B cell (primary cell): ENCODE measurements at regions of chr15 and their contacts with region 1.

Region 1: GRCh38 chr15:64809649-64810496 is 15.6 kb downstream of the PIF1 start:
- DNase-seq: peak; percentile 78
- ATAC-seq: peak; percentile 73
- H3K4me3 ChIP-seq: no peak overlapping the region
- H3K4me3 Mint-ChIP-seq: no peak overlapping the region
- H3K27ac ChIP-seq: no peak overlapping the region
- H3K27ac Mint-ChIP-seq: peak overlapping the region; percentile 56
- H3K4me1 ChIP-seq: peaks cover 0 to 11% of the 10 kb centered on the region in 2 donors
- H3K4me1 Mint-ChIP-seq: peaks cover 13% of the 10 kb centered on the region
- H3K27me3 ChIP-seq: no peaks in the 10 kb centered on the region
- H3K27me3 Mint-ChIP-seq: no peaks in the 10 kb centered on the region
- CTCF ChIP-seq: peak; percentile 93

Region 2: DNA sequence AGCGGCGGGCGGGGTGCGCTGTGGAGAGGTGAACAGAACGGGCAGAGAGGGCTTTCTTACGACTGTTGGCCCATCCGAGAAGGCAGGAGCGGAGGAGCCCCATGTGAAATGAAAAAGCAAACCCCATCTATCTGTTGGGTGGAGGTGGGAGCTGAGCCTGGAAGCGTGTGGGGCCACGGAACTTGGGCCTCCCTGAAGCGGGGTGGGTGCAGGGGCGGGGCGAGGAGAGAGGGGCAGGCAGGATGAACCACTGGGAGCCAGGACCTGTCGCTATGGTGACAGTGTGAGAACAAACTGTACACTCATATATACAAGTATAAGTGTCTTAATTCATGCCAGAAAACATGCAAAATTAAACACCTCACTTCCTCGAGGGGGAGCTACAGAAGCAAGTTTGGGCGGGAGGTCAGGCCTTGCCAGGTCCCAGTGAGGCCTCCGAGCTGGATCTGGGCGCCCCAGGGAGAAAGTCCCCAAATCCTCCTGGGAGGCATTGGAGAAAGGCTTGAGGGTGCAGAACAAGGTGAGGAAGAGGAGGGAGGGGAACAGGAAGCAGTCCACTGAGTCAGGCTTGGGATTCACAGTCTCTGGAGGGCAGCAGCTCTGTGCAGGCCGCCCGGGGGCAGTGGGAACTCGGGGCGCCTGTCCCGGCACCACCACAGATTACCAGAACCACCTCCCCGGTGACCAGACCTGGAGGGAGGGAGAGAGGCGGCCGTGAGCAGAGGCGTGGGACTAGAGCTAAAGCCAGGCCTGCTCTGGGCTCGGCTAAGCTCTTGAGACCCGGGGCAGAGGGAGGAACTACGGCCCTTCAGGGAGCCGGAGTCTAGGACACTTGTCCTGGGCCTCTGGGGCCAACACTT is 69.3 kb before region 1 on chr15:
- CTCF ChIA-PET with region 1: interaction called, 30 read pairs
- POLR2A ChIA-PET with region 1: no interaction called
- intact Hi-C with region 1: no loop called
- DNase-seq: no peak
- ATAC-seq: no peak
- H3K4me3 ChIP-seq: no peak overlapping the region
- H3K4me3 Mint-ChIP-seq: no peak overlapping the region
- H3K27ac ChIP-seq: no peak overlapping the region
- H3K27ac Mint-ChIP-seq: no peak overlapping the region
- H3K4me1 ChIP-seq: no peaks in the 10 kb centered on the region
- H3K4me1 Mint-ChIP-seq: no peaks in the 10 kb centered on the region
- H3K27me3 ChIP-seq: no peaks in the 10 kb centered on the region
- H3K27me3 Mint-ChIP-seq: no peaks in the 10 kb centered on the region
- CTCF ChIP-seq: no peak

Region 3: GRCh38 chr15:64783796-64784195 is 26.1 kb before region 1 on chr15:
- CTCF ChIA-PET with region 1: interaction called, 17 read pairs
- POLR2A ChIA-PET with region 1: no interaction called
- intact Hi-C with region 1: no loop called
- DNase-seq: no peak
- ATAC-seq: no peak
- H3K4me3 ChIP-seq: no peak overlapping the region
- H3K4me3 Mint-ChIP-seq: no peak overlapping the region
- H3K27ac ChIP-seq: no peak overlapping the region
- H3K27ac Mint-ChIP-seq: no peak overlapping the region
- H3K4me1 ChIP-seq: peaks cover 5 to 16% of the 10 kb centered on the region in 2 donors
- H3K4me1 Mint-ChIP-seq: peaks cover 10% of the 10 kb centered on the region
- H3K27me3 ChIP-seq: peaks cover 0 to 5% (median 0%) of the 10 kb centered on the region in 4 experiments
- H3K27me3 Mint-ChIP-seq: no peaks in the 10 kb centered on the region
- CTCF ChIP-seq: no peak

Region 4: GRCh38 chr15:64836023-64836536 is 26.2 kb after region 1 on chr15:
- CTCF ChIA-PET with region 1: interaction called, 34 read pairs
- POLR2A ChIA-PET with region 1: no interaction called
- intact Hi-C with region 1: no loop called
- DNase-seq: no peak
- ATAC-seq: no peak
- H3K4me3 ChIP-seq: no peak overlapping the region
- H3K4me3 Mint-ChIP-seq: peak overlapping the region; percentile 71
- H3K27ac ChIP-seq: no peak overlapping the region
- H3K27ac Mint-ChIP-seq: peak overlapping the region; percentile 69
- H3K4me1 ChIP-seq: peaks cover 10 to 18% of the 10 kb centered on the region in 2 donors
- H3K4me1 Mint-ChIP-seq: peaks cover 27% of the 10 kb centered on the region
- H3K27me3 ChIP-seq: no peaks in the 10 kb centered on the region
- H3K27me3 Mint-ChIP-seq: no peaks in the 10 kb centered on the region
- CTCF ChIP-seq: peak; percentile 62

Region 5: DNA sequence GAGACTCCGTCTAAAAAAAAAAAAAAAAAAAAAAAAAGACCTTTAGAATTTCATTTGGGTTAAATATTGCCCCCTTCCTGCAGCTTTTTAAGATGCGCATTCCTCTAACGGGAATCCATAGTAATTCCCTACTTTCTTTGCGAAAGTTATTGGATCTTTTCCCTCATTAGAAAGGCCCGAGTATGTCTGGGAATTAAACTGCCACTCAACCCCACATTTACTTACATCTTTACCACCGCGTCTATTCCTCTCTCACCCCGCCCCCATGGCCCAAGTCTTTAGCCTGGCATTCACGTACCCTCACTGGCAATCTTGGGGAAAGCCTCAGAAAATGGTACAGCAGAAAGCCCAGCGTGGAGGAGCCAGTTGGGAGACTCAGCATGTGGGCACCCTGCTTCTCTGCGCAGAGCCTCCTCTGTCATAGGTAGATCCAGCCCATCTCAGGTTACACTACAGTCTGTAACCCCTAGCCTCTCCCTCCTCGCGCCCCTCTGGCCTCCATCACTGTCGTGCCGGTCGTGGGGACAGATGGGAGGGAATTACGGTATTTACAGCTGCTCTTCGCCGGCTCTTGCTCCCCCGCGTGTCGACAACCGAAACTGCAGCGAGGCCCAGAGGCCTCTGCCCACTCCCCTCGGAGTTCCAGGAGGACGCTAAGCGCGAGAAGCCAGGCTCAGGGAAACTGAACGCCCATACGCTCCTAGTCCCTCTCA is 95.4 kb after region 1 on chr15:
- CTCF ChIA-PET with region 1: interaction called, 58 read pairs
- POLR2A ChIA-PET with region 1: interaction called, 3 read pairs
- intact Hi-C with region 1: loop called (anchors 1 kb)
- DNase-seq: peak; percentile 85
- ATAC-seq: peak; percentile 95
- H3K4me3 ChIP-seq: peak overlapping the region; percentile 19 to 61 (median 44)
- H3K4me3 Mint-ChIP-seq: peak overlapping the region; percentile 84
- H3K27ac ChIP-seq: no peak overlapping the region
- H3K27ac Mint-ChIP-seq: peak overlapping the region; percentile 77
- H3K4me1 ChIP-seq: peaks cover 21 to 24% of the 10 kb centered on the region in 2 donors
- H3K4me1 Mint-ChIP-seq: peaks cover 36% of the 10 kb centered on the region
- H3K27me3 ChIP-seq: peaks cover 0 to 7% (median 0%) of the 10 kb centered on the region in 4 experiments
- H3K27me3 Mint-ChIP-seq: peaks cover 4% of the 10 kb centered on the region
- CTCF ChIP-seq: peak; percentile 86

Region 6: DNA sequence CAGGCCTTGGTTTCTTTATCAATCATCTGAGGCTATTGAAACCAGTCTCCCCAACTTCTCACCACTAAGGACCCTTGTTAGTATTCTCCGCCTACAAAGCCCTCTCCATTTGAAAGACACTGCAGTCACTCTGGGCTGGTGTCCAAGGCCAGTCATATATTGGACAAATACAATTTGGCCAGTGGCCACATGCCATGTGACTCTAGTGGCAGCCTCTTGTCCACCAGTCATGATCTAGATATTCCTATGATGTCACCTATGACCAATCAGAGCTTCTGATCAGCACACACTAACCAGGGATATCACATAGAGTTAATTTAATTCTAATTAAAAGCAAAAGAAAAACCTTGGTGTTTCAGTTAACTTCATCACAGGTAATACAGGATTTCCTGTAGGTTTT is 1127.6 kb after region 1 on chr15:
- CTCF ChIA-PET with region 1: no interaction called
- POLR2A ChIA-PET with region 1: no interaction called
- intact Hi-C with region 1: no loop called
- DNase-seq: no peak
- ATAC-seq: no peak
- H3K4me3 ChIP-seq: no peak overlapping the region
- H3K4me3 Mint-ChIP-seq: no peak overlapping the region
- H3K27ac ChIP-seq: no peak overlapping the region
- H3K27ac Mint-ChIP-seq: no peak overlapping the region
- H3K4me1 ChIP-seq: no peaks in the 10 kb centered on the region
- H3K4me1 Mint-ChIP-seq: no peaks in the 10 kb centered on the region
- H3K27me3 ChIP-seq: no peaks in the 10 kb centered on the region
- H3K27me3 Mint-ChIP-seq: no peaks in the 10 kb centered on the region
- CTCF ChIP-seq: no peak